A549 (cell line): ENCODE measurements at regions of chr3 and their contacts with region 1.

Region 1: DNA sequence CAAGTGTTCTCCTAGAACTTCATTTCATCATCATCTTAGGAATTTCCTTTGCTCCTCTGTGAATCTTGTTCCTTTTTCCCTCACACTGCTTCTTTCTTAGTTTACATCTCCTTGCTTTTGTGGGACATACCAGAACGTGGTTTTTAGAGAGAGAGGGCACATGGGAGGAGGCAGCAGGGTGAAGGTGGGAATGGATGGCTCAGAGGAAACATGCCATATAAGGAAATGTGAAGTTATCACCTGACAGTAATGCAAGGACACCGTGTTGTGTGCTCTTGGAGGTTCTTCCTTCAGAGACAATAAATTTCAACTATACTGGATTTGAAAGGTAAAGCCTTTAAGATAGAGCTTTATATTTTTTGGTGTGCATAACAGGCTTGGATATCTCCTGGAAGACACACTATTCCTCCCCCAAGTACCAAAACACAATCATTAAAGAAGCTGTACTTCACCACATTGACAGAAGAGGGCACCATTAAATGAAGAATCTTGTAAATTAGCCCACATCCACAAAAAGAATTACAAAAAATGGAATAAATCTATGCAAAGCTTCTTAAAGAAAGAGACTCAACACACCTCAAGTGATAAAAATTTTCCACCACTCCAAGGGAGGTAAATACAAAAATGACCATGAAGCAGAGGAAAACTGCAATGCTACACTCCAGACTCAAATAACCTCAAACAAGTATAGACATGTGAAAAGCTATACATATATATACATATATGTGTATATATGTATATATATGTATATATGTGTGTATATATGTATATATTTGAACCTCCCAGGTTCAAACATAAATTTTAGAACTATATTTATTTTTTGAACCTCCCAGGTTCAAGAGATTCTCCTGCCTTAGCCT is 26.1 kb downstream of the RPL39L start:
- DNase-seq: peak in 1 of 2 experiments; percentile 13
- ATAC-seq: no peak
- H3K4me3 ChIP-seq: no peak overlapping the region
- H3K27ac ChIP-seq: no peak overlapping the region
- H3K4me1 ChIP-seq: no peaks in the 10 kb centered on the region
- CTCF ChIP-seq: peak; percentile 48
- EP300 ChIP-seq: no peak
- POLR2A ChIP-seq: no peak
- RAD21 ChIP-seq: peak; percentile 38 to 48

Region 2: GRCh38 chr3:186849374-186849975 is 263.7 kb before region 1 on chr3:
- CTCF ChIA-PET with region 1: interaction called, 11 read pairs
- POLR2A ChIA-PET with region 1: no interaction called
- DNase-seq: peak; percentile 28 to 42
- ATAC-seq: peak in 1 of 2 experiments; percentile 79; a peak in 3 of 6 replicates
- H3K4me3 ChIP-seq: no peak overlapping the region
- H3K27ac ChIP-seq: no peak overlapping the region
- H3K4me1 ChIP-seq: no peaks in the 10 kb centered on the region
- CTCF ChIP-seq: peak; percentile 61
- EP300 ChIP-seq: no peak
- POLR2A ChIP-seq: no peak
- RAD21 ChIP-seq: peak; percentile 70 to 77

Region 3: DNA sequence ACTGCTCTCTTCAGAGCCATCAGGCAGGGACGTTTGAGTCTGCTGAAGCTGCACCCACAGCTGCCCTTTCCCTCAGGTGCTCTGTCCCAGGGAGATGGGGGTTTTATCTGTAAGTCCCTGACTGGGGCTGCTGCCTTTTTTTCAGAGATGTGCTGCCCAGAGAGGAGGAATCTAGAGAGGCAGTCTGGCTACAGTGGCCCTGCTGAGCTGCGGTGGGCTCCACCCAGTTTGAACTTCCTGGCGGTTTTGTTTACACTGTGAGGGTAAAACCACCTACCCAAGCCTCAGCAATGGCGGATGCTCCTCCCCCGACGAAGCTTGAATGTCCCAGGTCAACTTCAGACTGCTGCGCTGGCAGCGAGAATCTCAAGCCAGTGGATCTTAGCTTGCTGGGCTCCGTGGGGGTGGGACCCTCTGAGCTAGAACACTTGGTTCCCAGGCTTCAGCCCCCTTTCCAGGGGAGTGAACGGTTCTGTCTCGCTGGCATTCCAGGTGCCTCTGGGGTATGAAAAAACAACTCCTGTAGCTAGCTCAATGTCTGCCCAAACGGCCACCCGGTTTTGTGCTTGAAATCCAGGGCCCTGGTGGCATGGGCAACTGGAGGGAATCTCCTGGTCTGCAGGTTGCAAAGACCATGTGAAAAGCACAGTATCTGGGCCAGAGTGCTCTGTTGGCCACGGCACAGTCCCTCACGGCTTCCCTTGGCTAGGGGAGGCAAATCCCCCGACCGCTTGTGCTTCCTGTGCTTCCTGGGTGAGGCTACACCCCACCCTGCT is 203.9 kb before region 1 on chr3:
- CTCF ChIA-PET with region 1: no interaction called
- POLR2A ChIA-PET with region 1: no interaction called
- DNase-seq: no peak
- ATAC-seq: no peak
- H3K4me3 ChIP-seq: no peak overlapping the region
- H3K27ac ChIP-seq: no peak overlapping the region
- H3K4me1 ChIP-seq: no peaks in the 10 kb centered on the region
- CTCF ChIP-seq: no peak
- EP300 ChIP-seq: no peak
- POLR2A ChIP-seq: no peak
- RAD21 ChIP-seq: no peak

Region 4: DNA sequence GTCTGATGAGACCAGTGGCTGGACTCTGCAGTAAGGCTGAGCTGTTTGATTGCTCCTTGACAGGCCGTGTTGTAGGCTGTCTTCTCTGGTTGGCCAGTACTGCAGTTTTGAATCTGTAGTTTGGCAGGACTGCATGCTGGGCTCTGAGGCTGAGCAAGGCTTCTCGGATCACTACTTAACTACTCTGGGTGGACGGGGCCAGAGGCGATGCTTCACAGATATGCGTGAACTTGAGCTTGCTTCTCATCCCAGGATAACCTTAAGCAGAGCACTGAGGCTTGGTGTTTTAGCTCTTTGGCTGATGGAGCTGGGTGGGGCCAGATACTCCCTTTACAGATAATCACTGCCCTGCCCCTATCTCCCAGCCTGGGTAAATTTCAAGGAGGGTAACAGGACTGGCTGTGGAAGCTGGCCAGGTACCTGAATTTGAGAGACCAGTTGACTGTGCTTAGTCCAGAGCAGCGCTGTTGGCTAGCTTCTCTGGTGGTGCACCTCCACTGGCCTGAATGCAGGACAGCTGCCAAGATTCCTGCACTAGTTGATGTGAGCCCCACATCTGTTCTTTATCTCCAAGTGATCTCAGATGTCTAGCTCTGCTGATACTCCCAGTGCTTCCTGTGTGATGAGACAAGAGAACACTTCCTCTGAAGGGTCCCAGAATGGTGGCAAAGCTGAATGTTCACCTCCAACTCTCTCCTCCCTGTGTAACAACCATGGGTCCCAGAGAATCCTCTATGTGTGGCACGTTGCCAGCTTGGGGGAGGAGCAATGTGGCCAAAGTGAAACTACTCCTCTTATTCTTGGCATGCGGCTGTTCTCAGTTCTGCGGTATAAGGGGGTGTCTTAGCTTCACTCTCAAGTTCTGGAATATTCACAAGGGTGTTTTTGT is 11.7 kb before region 1 on chr3:
- CTCF ChIA-PET with region 1: interaction called, 12 read pairs
- POLR2A ChIA-PET with region 1: no interaction called
- DNase-seq: peak; percentile 8 to 22
- ATAC-seq: peak; percentile 76 to 78
- H3K4me3 ChIP-seq: peak overlapping the region; percentile 25; the same call in 1 of the 3 replicates
- H3K27ac ChIP-seq: peak overlapping the region; percentile 56 to 70
- H3K4me1 ChIP-seq: peaks cover 15% of the 10 kb centered on the region; the same call in 2 of the 3 replicates
- CTCF ChIP-seq: no peak
- EP300 ChIP-seq: no peak
- POLR2A ChIP-seq: no peak
- RAD21 ChIP-seq: no peak

Region 5: DNA sequence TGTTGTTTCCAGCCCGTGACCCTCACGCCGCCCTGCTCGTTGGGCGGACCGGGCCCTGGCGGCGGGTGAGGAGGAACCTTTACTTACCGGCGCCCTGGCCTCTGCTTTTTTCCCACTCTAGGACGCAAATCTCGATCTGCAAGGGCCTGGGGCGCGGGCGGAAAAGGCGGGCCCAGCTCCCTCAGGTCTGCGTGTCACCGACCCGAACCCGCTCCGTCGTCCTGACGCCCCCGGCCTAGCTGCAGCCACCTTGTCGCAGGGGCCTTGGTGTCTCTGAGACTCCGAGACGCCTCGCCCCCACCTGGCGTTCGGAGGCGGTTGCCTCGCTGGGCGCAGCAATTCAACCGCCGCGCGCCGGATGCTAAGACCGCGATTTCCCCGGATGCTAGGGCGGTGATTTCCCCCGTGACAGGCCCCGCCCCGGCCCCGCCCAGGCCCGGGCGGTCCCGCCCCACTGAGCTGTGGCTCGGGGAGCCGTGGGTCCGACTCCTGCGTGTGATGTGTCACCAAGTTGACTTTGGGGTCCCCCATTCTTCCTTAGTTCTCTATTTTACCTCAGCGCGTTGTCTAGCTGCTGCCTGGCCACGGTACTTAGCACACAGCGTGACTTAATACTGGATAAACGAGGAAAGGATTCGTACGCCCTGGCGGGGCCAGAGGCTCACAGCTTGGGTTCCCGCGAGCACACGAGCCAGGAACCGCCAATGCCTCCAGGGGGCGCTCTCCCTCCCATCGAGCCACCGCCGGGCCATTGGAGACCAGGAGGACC is 26.1 kb after region 1 on chr3 and contains the start of gene RPL39L:
- CTCF ChIA-PET with region 1: interaction called, 28 read pairs
- POLR2A ChIA-PET with region 1: interaction called, 4 read pairs
- DNase-seq: peak; percentile 86 to 87
- ATAC-seq: peak; percentile 99
- H3K4me3 ChIP-seq: peak within 1 kb of the TSS; percentile 68
- H3K27ac ChIP-seq: peak within 1 kb of the TSS; percentile 76 to 93
- H3K4me1 ChIP-seq: no peaks in the 10 kb centered on the region
- CTCF ChIP-seq: peak; percentile 82
- EP300 ChIP-seq: no peak
- POLR2A ChIP-seq: peak; percentile 76
- RAD21 ChIP-seq: peak in 1 of 2 experiments; percentile 44; a peak in 4 of 5 replicates
- polyA plus RNA-seq, gene RPL39L: 54.2 and 55.8 TPM in 2 replicates

Region 6: DNA sequence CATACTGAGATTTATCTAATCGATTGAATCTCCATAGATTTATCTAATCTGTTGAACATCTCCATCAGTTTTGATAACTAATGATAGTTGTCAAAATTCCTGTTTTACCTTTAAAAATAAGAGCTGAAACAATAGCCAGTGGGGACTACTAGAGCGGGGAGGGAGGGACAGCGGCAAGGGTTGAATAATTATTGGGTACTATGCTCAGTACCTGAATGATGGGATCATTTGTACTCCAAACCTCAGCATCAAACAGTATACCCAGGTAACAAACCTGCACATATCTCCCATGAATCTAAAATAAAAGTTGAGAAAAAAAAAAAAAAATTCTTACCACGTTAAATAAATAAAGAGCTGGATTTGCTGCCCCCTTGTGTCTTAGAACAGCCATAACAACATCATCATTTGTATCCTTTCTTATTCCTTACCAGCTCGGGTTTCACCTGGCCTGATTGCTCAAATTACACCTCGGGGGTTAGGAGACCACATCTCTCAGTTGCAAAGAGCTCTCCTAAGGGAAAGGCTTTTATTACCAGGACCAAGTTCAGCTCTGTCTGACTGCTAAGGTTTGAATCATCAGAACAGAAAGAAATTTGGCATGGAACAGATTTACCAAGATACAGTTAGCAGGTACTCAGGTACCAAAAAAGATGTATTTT is 51.9 kb after region 1 on chr3:
- CTCF ChIA-PET with region 1: interaction called, 32 read pairs
- POLR2A ChIA-PET with region 1: no interaction called
- DNase-seq: peak; percentile 21 to 53
- ATAC-seq: peak; percentile 50 to 62; a peak in 3 of 6 replicates
- H3K4me3 ChIP-seq: no peak overlapping the region
- H3K27ac ChIP-seq: no peak overlapping the region
- H3K4me1 ChIP-seq: no peaks in the 10 kb centered on the region
- CTCF ChIP-seq: peak; percentile 72
- EP300 ChIP-seq: no peak
- POLR2A ChIP-seq: no peak
- RAD21 ChIP-seq: peak; percentile 64 to 66